IMR-90 (cell line): ENCODE measurements at regions of chr4 and their contacts with region 1.

Region 1: DNA sequence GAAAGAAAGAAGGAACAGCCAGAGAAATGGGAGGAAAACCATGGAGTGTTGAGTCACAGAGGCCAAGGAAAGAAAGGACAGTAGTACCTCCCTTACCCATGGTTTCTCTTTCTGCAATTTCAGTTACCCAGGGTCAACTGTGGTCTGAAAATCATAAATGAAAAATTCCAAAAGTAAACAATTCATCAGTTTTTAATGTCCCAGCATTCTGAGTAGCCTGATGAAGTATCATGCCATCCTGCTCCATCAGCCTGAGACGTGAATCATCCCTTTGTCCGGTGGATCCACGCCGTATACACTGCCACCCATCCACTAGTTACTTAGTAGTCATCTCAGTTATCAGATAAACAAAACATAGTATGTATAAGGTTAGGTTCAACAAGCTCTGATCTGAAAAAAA is 114.2 kb downstream of the COMMD8 start:
- DNase-seq: peak; percentile 89
- ATAC-seq: peak; percentile 91
- H3K4me3 ChIP-seq: no peak overlapping the region
- H3K27ac ChIP-seq: no peak overlapping the region
- H3K4me1 ChIP-seq: peaks cover 1% of the 10 kb centered on the region; the same call in 1 of the 2 replicates
- H3K27me3 ChIP-seq: no peaks in the 10 kb centered on the region
- CTCF ChIP-seq: no peak
- POLR2A ChIP-seq: no peak
- RAD21 ChIP-seq: no peak

Region 2: DNA sequence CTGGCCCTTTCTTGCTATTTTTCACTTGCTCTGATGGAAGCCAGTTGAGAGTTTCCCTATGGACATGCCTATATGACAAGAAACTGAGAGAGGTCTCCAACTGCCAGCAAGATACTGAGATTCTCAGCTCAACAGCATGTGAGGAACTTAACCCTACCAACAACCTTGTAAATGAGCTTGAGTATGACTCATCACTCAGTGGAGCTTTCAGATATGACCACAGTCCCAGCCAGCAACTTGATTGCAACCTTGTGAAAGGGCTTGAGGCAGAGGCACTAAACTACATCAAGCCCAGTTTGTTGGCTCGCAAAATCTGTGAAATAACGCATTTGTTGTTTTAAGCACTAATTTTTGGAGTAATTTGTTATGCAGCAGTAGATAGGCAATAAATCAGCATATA is 61.6 kb before region 1 on chr4:
- CTCF ChIA-PET with region 1: no interaction called
- POLR2A ChIA-PET with region 1: no interaction called
- dilution Hi-C with region 1: no loop called
- in situ Hi-C with region 1: no loop called
- intact Hi-C with region 1: loop called (anchors 1 kb)
- DNase-seq: peak; percentile 87
- ATAC-seq: peak; percentile 85
- H3K4me3 ChIP-seq: no peak overlapping the region
- H3K27ac ChIP-seq: no peak overlapping the region
- H3K4me1 ChIP-seq: no peaks in the 10 kb centered on the region
- H3K27me3 ChIP-seq: no peaks in the 10 kb centered on the region
- CTCF ChIP-seq: no peak
- POLR2A ChIP-seq: no peak
- RAD21 ChIP-seq: no peak